CD8-positive, alpha-beta T cell (primary cell): ENCODE measurements at regions of chr19 and their contacts with region 1.

Region 1: DNA sequence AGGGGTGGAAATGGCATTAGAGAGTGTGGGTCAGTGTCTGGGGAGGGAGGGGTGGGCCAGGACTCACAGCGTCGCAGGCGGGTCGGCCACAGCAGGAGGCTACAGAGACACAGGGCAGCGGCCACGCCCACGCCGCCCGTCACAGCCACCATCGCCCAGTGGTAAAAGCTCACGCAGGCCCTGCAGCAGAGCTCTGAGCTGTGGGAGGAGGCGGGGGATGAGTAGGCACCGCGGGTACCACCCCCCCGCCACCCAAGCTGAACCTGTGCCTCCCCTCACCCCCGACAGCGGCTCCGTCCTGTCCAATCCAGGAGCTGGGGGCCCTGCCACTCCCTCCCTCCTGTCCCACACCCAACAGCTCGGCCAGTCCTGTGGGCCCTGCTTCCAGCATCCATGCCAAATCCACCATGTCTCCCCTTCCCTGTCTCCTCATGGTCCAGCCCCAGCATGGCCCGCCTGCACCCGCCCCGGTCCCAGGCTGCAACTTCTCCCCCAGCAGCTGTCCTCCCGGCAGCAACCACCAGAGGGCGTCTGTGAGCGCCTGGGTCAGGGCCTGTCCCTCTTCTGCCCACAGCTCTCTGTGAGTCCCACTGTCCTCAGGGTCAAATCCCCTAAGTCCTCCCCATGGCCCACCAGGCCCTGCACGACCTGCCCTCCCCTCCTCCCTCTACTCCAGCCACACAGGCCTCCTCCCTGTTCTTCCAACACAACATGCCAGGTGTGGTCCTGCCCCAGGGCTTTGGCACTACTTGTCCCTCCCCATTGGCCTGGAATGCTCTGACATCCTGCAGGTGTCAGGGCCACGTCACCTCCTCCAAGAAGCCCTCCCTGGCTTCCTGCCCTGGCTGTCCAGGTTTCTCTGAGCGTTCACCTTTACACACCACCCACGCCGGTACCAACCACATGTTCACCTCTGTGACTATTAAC is 6.0 kb downstream of the TEKTIP1 start:
- DNase-seq: peak; percentile 62 to 89 (median 76)
- ATAC-seq: peak; percentile 86
- H3K4me3 ChIP-seq: no peak overlapping the region
- H3K4me3 Mint-ChIP-seq: no peak overlapping the region
- H3K27ac ChIP-seq: peak overlapping the region in 1 of 2 experiments; percentile 39
- H3K27ac Mint-ChIP-seq: no peak overlapping the region
- H3K4me1 ChIP-seq: no peaks in the 10 kb centered on the region
- H3K4me1 Mint-ChIP-seq: peaks cover 10% of the 10 kb centered on the region
- H3K27me3 ChIP-seq: no peaks in the 10 kb centered on the region
- H3K27me3 Mint-ChIP-seq: no peaks in the 10 kb centered on the region
- CTCF ChIP-seq: peak; percentile 85

Region 2: DNA sequence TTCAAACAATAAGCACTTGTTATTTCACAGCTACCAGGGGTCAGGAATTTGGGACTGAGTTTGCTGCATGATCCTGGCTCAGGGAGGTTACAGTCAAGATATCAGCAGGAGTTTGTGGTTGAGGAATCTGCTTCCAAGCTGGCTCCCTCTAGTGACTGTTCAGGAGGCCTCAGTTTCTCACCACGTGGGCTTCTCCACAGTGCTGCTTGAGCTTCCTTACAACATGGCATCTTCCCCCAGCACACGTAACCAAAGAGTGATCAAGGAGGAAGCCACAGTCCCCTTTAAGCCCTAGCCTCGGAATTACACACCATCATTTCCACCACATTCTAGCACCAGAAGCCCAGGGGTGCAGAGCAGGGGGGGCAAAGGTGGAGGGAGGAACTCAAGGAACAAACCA is 291.7 kb before region 1 on chr19:
- CTCF ChIA-PET with region 1: no interaction called
- POLR2A ChIA-PET with region 1: no interaction called
- intact Hi-C with region 1: no loop called
- DNase-seq: no peak
- ATAC-seq: no peak
- H3K4me3 ChIP-seq: no peak overlapping the region
- H3K4me3 Mint-ChIP-seq: no peak overlapping the region
- H3K27ac ChIP-seq: no peak overlapping the region
- H3K27ac Mint-ChIP-seq: no peak overlapping the region
- H3K4me1 ChIP-seq: no peaks in the 10 kb centered on the region
- H3K4me1 Mint-ChIP-seq: no peaks in the 10 kb centered on the region
- H3K27me3 ChIP-seq: peaks cover 0 to 3% of the 10 kb centered on the region in 2 experiments
- H3K27me3 Mint-ChIP-seq: peaks cover 17% of the 10 kb centered on the region
- CTCF ChIP-seq: no peak

Region 3: DNA sequence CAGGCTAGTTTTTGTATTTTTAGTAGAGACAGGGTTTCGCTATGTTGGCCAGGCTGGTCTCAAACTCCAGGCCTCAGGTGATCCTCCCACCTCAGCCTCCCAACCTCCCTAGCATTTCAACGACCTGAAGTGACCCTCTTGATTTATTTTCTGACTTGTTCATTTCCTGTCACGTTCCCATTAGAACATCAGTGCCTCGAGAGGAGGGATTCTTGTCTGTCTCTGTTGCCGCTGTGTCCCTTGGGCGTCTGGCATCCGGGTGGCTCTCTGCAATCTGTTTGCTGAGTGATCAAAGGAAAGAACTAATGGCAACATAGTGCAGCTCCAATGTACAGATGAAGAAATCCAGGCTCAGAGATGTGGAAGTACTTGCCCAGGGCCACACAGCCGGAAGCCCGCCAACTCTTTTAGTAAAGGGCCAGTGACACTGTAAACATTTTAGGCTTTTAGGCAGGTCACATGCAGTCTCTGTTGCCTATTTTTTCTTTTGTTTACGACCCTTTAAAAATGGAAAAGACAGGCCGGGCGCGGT is 131.1 kb before region 1 on chr19:
- CTCF ChIA-PET with region 1: no interaction called
- POLR2A ChIA-PET with region 1: no interaction called
- intact Hi-C with region 1: no loop called
- DNase-seq: no peak
- ATAC-seq: no peak
- H3K4me3 ChIP-seq: no peak overlapping the region
- H3K4me3 Mint-ChIP-seq: no peak overlapping the region
- H3K27ac ChIP-seq: no peak overlapping the region
- H3K27ac Mint-ChIP-seq: no peak overlapping the region
- H3K4me1 ChIP-seq: no peaks in the 10 kb centered on the region
- H3K4me1 Mint-ChIP-seq: no peaks in the 10 kb centered on the region
- H3K27me3 ChIP-seq: no peaks in the 10 kb centered on the region
- H3K27me3 Mint-ChIP-seq: no peaks in the 10 kb centered on the region
- CTCF ChIP-seq: no peak

Region 4: GRCh38 chr19:3572132-3572854 is 27.3 kb after region 1 on chr19:
- CTCF ChIA-PET with region 1: interaction called, 5 read pairs
- POLR2A ChIA-PET with region 1: no interaction called
- intact Hi-C with region 1: loop called in 1 of 2 experiments (anchors 1 kb)
- DNase-seq: peak; percentile 98 to 100 (median 99)
- ATAC-seq: peak; percentile 95
- H3K4me3 ChIP-seq: peak overlapping the region; percentile 66 to 68
- H3K4me3 Mint-ChIP-seq: peak overlapping the region; percentile 77
- H3K27ac ChIP-seq: peak overlapping the region; percentile 60 to 65
- H3K27ac Mint-ChIP-seq: no peak overlapping the region
- H3K4me1 ChIP-seq: peaks cover 15% of the 10 kb centered on the region
- H3K4me1 Mint-ChIP-seq: peaks cover 18% of the 10 kb centered on the region
- H3K27me3 ChIP-seq: no peaks in the 10 kb centered on the region
- H3K27me3 Mint-ChIP-seq: no peaks in the 10 kb centered on the region
- CTCF ChIP-seq: no peak

Region 5: GRCh38 chr19:3586124-3586626 is 41.2 kb after region 1 on chr19:
- CTCF ChIA-PET with region 1: interaction called, 13 read pairs
- POLR2A ChIA-PET with region 1: interaction called, 6 read pairs
- intact Hi-C with region 1: loop called (anchors 5 kb)
- DNase-seq: peak in 8 of 9 experiments; percentile 31 to 79 (median 56)
- ATAC-seq: peak; percentile 63
- H3K4me3 ChIP-seq: peak overlapping the region; percentile 45 to 51
- H3K4me3 Mint-ChIP-seq: peak overlapping the region; percentile 53
- H3K27ac ChIP-seq: no peak overlapping the region
- H3K27ac Mint-ChIP-seq: no peak overlapping the region
- H3K4me1 ChIP-seq: no peaks in the 10 kb centered on the region
- H3K4me1 Mint-ChIP-seq: no peaks in the 10 kb centered on the region
- H3K27me3 ChIP-seq: no peaks in the 10 kb centered on the region
- H3K27me3 Mint-ChIP-seq: no peaks in the 10 kb centered on the region
- CTCF ChIP-seq: peak; percentile 65

Region 6: GRCh38 chr19:3618144-3618810 is 73.3 kb after region 1 on chr19:
- CTCF ChIA-PET with region 1: interaction called, 13 read pairs
- POLR2A ChIA-PET with region 1: no interaction called
- intact Hi-C with region 1: loop called (anchors 1 to 2 kb)
- DNase-seq: peak in 8 of 9 experiments; percentile 31 to 79 (median 56)
- ATAC-seq: peak; percentile 68
- H3K4me3 ChIP-seq: no peak overlapping the region
- H3K4me3 Mint-ChIP-seq: no peak overlapping the region
- H3K27ac ChIP-seq: no peak overlapping the region
- H3K27ac Mint-ChIP-seq: no peak overlapping the region
- H3K4me1 ChIP-seq: peaks cover 13% of the 10 kb centered on the region
- H3K4me1 Mint-ChIP-seq: peaks cover 10% of the 10 kb centered on the region
- H3K27me3 ChIP-seq: no peaks in the 10 kb centered on the region
- H3K27me3 Mint-ChIP-seq: no peaks in the 10 kb centered on the region
- CTCF ChIP-seq: peak; percentile 69

Region 7: GRCh38 chr19:3700221-3701032 is 155.4 kb after region 1 on chr19 and contains the start of gene PIP5K1C:
- CTCF ChIA-PET with region 1: no interaction called
- POLR2A ChIA-PET with region 1: no interaction called
- intact Hi-C with region 1: loop called (anchors 5 to 10 kb)
- DNase-seq: peak; percentile 84 to 97 (median 92)
- ATAC-seq: peak; percentile 100
- H3K4me3 ChIP-seq: peak within 1 kb of the TSS; percentile 61 to 63
- H3K4me3 Mint-ChIP-seq: peak within 1 kb of the TSS; percentile 88
- H3K27ac ChIP-seq: no peak within 1 kb of the TSS
- H3K27ac Mint-ChIP-seq: peak within 1 kb of the TSS; percentile 81
- H3K4me1 ChIP-seq: peaks cover 19% of the 10 kb centered on the region
- H3K4me1 Mint-ChIP-seq: peaks cover 29% of the 10 kb centered on the region
- H3K27me3 ChIP-seq: no peaks in the 10 kb centered on the region
- H3K27me3 Mint-ChIP-seq: peaks cover 1% of the 10 kb centered on the region
- CTCF ChIP-seq: peak; percentile 82
- total RNA-seq, gene PIP5K1C: 11.4 to 12.2 TPM

Region 8: DNA sequence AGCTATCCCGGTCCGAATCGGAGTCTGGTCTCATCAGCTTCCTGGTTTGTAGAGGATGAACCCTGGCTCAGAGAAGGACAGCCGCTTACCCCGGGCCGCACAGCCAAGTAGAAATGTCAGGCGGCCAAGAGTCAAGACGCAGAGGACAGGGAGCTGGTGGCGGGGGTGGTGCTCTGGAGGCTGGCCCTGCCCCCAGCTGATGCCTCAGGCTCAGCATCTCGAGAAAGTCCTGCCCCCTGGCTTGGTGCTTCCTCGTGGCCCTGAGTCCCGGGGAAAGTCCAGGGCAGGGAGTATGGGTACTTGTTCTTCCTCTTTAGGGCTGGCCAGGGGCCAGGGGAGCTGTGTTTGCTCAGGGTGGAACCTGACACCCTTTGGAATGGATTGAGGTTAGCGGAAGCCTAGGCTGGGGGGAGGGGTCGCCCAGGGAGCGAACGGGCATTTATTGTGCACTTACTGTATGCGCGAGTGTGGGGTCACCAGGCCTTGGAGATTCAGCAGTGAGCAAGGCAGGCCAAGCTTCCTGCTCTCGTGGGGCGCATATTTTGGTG is 165.3 kb after region 1 on chr19:
- CTCF ChIA-PET with region 1: interaction called, 3 read pairs
- POLR2A ChIA-PET with region 1: no interaction called
- intact Hi-C with region 1: loop called (anchors 5 to 10 kb)
- DNase-seq: peak in 1 of 9 experiments; percentile 37
- ATAC-seq: no peak
- H3K4me3 ChIP-seq: no peak overlapping the region
- H3K4me3 Mint-ChIP-seq: no peak overlapping the region
- H3K27ac ChIP-seq: no peak overlapping the region
- H3K27ac Mint-ChIP-seq: no peak overlapping the region
- H3K4me1 ChIP-seq: no peaks in the 10 kb centered on the region
- H3K4me1 Mint-ChIP-seq: peaks cover 6% of the 10 kb centered on the region
- H3K27me3 ChIP-seq: peaks cover 0 to 4% of the 10 kb centered on the region in 2 experiments
- H3K27me3 Mint-ChIP-seq: peaks cover 5% of the 10 kb centered on the region
- CTCF ChIP-seq: no peak